OCI-LY7 (cell line): ENCODE measurements at regions of chr6 and their contacts with region 1.

Region 1: GRCh38 chr6:99393698-99394531 is at the start of gene COQ3:
- DNase-seq: peak; percentile 74
- H3K4me3 ChIP-seq: peak within 1 kb of the TSS; percentile 74
- H3K27ac ChIP-seq: peak within 1 kb of the TSS; percentile 74
- H3K4me1 ChIP-seq: peaks cover 4% of the 10 kb centered on the region
- CTCF ChIP-seq: no peak
- total RNA-seq, gene COQ3: 3.7 and 8.3 TPM in 2 replicates

Region 2: GRCh38 chr6:98215531-98215930 is 1178.4 kb before region 1 on chr6:
- CTCF ChIA-PET with region 1: no interaction called
- POLR2A ChIA-PET with region 1: no interaction called
- intact Hi-C with region 1: no loop called
- DNase-seq: no peak
- H3K4me3 ChIP-seq: no peak overlapping the region
- H3K27ac ChIP-seq: no peak overlapping the region
- H3K4me1 ChIP-seq: no peaks in the 10 kb centered on the region
- CTCF ChIP-seq: no peak

Region 3: GRCh38 chr6:98581705-98582104 is 812.2 kb before region 1 on chr6:
- CTCF ChIA-PET with region 1: no interaction called
- POLR2A ChIA-PET with region 1: no interaction called
- intact Hi-C with region 1: no loop called
- DNase-seq: no peak
- H3K4me3 ChIP-seq: no peak overlapping the region
- H3K27ac ChIP-seq: no peak overlapping the region
- H3K4me1 ChIP-seq: no peaks in the 10 kb centered on the region
- CTCF ChIP-seq: no peak

Region 4: GRCh38 chr6:99270826-99271225 is 123.1 kb before region 1 on chr6:
- CTCF ChIA-PET with region 1: no interaction called
- POLR2A ChIA-PET with region 1: no interaction called
- intact Hi-C with region 1: no loop called
- DNase-seq: no peak
- H3K4me3 ChIP-seq: no peak overlapping the region
- H3K27ac ChIP-seq: no peak overlapping the region
- H3K4me1 ChIP-seq: no peaks in the 10 kb centered on the region
- CTCF ChIP-seq: no peak

Region 5: DNA sequence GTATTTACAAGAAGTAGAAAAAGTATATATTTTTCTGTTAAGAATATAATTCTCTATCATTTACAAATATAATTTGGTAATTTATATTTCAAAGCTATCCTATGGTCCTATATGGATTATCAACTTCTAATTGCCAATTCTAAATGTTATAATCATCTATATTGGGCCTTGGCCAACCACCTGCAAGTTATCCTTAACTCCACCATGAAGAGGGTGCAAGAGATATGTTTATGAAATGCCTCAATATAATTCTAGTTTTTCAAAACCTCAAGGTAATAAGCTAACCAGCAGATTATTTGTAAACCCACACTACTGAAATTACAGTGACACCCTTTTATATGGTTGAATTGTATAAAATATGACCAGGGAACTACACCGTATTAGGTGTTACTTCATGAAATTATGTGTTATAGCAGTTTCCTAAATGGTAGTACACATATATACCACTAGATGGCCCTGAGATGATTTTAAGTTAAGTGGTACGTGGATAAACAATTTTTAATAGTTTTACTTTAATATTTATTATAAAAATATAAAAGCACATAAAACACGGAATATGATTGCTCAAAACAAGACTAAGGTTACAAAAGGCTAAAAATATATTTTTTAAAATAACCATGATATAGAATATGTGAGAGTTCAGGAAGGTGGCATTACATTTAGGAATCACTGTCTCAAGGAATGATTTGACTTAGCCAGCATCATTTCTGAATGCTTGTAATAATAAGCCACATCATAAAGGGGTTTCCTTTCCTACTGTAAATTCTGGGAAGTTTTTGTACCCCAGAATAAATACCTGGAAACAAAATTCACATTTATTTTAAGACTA is 41.0 kb after region 1 on chr6:
- CTCF ChIA-PET with region 1: no interaction called
- POLR2A ChIA-PET with region 1: interaction called, 11 read pairs
- intact Hi-C with region 1: no loop called
- DNase-seq: peak; percentile 50
- H3K4me3 ChIP-seq: no peak overlapping the region
- H3K27ac ChIP-seq: no peak overlapping the region
- H3K4me1 ChIP-seq: no peaks in the 10 kb centered on the region
- CTCF ChIP-seq: peak; percentile 83

Region 6: GRCh38 chr6:99641270-99641669 is 247.4 kb after region 1 on chr6:
- CTCF ChIA-PET with region 1: no interaction called
- POLR2A ChIA-PET with region 1: no interaction called
- intact Hi-C with region 1: no loop called
- DNase-seq: no peak
- H3K4me3 ChIP-seq: no peak overlapping the region
- H3K27ac ChIP-seq: no peak overlapping the region
- H3K4me1 ChIP-seq: no peaks in the 10 kb centered on the region
- CTCF ChIP-seq: no peak